ENCODE measurements at regions of chr20 and their contacts with region 1.

Region 1: DNA sequence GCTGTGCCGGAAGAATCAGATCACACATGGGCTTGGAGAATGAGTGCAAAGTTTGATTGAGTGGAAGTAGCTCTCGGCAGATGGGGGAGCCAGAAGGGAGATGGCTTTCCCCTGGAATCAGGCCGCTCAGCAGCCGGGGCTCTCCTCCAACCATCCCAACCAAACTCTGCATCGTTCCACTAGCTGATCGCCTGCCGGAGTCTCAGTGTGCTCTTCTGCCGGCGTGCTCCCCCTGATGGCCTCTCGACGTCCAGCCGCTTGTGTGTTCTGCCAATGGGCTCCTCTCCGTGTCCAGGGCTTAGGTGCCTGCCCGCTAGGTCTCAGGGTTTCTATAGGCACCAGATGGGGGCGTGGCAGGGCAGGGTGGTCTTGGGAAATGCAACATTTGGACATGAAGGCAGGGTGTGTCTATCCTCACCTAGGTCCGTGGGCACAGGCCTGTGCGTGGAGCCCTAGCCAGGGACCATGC is 4.9 kb upstream of the BIRC7 start:
- DNase-seq: peak; percentile 90

Region 2: GRCh38 chr20:63056236-63056948 is 174.4 kb before region 1 on chr20:
- intact Hi-C with region 1: loop called in 1 of 2 experiments (anchors 10 kb)
- DNase-seq: peak; percentile 74

Measured in posterior vena cava (tissue), 2 donors.